Sigmoid colon (tissue), 7 donors: ENCODE measurements at regions of chr1 and their contacts with region 1.

Region 1: DNA sequence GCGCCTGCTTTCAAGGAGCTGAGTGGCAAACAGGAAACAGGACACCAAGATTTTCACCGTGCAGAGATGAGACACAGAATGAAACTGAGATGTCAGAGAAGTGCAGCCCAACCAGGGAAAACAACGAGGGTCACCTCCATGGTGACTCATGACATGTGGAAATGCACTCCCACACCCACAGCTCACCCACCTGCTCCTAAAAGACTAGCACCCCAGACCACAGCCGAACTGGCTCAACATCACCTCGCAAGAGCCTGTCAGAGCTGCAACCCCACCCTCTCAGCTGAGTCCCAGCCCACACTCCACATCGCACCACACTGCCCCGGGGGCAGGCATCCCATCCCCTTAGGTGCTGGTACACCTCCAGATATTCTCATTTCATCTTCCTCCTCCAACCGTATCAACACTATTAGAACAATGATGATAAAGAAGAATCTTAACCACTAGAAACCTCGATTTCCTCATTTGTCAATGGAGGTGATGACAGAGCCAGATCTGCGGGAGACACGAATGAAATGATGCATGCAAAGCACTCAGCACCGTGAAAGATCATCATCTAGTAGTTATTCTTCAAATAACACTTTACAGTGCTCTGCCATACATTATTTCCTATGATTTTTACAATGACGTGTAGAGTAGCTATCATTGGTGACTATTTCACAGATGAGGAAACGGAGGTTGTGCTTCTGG is 103.2 kb downstream of the DMRTB1 start:
- DNase-seq: peak; percentile 38
- H3K4me3 ChIP-seq: no peak overlapping the region
- H3K27ac ChIP-seq: no peak overlapping the region
- H3K4me1 ChIP-seq: peaks cover 0 to 15% (median 11%) of the 10 kb centered on the region in 4 donors
- H3K27me3 ChIP-seq: no peaks in the 10 kb centered on the region
- CTCF ChIP-seq: no peak
- EP300 ChIP-seq: no peak
- POLR2A ChIP-seq: no peak

Region 2: DNA sequence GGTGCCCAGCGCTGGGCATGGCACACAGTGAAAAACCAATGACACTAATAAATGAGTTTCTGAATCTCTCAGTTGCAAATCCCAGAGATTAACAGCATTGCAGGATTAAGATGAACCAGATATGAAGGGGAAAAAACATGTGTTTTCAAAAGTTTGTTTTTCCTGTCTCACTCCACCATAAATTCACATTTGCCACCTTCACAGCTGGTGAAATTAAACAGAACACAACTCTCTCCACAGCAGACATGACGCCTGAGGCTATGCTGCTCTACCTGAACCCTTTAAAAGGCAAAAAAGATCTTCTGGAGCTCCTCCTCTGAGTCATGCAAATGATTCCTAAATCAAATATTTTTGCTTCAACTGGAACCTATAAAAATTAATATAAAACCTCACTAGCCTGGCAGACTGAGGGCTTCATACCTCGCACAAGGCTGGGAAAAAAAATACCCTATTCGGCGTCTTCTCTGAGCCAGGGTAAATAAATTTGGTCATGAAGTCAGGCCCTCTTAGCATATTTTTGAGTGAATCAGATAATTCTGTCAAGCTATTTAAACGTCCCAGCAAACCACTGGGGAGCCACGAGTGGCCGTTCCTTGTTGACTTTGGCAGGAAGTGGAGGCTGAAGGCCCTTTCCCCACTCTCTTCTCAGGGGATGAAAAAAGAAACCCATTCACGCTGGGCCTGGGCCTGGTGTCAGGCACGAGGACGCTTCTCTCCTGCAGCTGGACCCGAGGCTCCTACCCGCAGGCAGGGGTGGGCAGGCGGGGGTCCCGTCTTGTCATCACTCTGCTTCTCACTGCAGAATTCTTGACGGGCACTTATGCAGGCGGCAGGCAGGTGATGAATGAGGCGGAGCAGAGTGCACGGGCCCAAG is 50.3 kb before region 1 on chr1:
- intact Hi-C with region 1: loop called (anchors 5 kb)
- DNase-seq: no peak
- H3K4me3 ChIP-seq: no peak overlapping the region
- H3K27ac ChIP-seq: peak overlapping the region in 3 of 4 donors; percentile 70 to 78 (median 71)
- H3K4me1 ChIP-seq: peaks cover 0 to 21% (median 20%) of the 10 kb centered on the region in 4 donors
- H3K27me3 ChIP-seq: no peaks in the 10 kb centered on the region
- CTCF ChIP-seq: no peak
- EP300 ChIP-seq: peak in 2 of 4 donors; percentile 5 to 30
- POLR2A ChIP-seq: no peak